ENCODE measurements at regions of chrX and their contacts with region 1.

Region 1: DNA sequence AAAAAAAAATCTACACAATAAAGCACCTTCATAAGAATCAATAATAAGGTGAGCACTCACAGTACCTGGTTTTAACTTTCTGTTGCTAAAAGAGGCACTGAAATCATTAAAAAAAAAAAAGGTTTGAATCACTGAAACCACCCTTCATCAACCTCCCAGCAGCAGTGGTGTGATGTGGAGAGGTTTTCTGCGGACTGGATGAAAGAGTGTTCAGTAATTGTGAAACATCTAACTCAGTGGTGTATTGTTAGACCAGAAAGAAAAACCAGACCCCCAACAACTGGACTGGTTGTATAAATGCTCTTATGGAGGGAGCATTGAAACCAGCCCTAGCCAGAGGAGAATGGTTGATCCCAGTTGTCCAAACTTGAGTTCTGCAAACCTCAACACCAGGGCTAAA is 63.2 kb downstream of the SPIN3 start:
- DNase-seq: no peak
- ATAC-seq: no peak
- H3K4me3 ChIP-seq: no peak overlapping the region
- H3K4me3 Mint-ChIP-seq: no peak overlapping the region
- H3K27ac ChIP-seq: no peak overlapping the region
- H3K27ac Mint-ChIP-seq: no peak overlapping the region
- H3K4me1 ChIP-seq: no peaks in the 10 kb centered on the region
- H3K4me1 Mint-ChIP-seq: no peaks in the 10 kb centered on the region
- H3K27me3 ChIP-seq: no peaks in the 10 kb centered on the region
- H3K27me3 Mint-ChIP-seq: no peaks in the 10 kb centered on the region
- CTCF ChIP-seq: no peak

Region 2: DNA sequence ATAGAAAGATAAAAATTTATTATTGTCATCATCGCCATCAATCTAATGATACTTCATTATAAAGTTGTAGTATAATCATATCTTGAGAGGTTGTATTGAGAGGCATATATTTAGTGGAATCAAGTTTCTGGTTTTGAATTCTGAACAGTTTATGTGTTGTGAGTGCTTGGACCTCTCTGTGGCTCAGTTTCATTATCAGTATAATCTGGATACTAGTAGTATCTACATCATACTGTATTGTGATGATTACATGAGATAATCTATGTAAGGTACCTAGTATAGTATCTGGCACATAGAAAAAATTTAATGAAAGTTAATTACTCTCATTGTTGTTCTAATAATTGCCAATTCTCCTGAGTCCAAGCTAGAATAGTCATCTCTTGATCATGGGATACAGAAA is 529.9 kb before region 1 on chrX:
- CTCF ChIA-PET with region 1: no interaction called
- POLR2A ChIA-PET with region 1: no interaction called
- intact Hi-C with region 1: loop called in 1 of 2 experiments (anchors 5 kb)
- DNase-seq: no peak
- ATAC-seq: no peak
- H3K4me3 ChIP-seq: no peak overlapping the region
- H3K4me3 Mint-ChIP-seq: no peak overlapping the region
- H3K27ac ChIP-seq: no peak overlapping the region
- H3K27ac Mint-ChIP-seq: no peak overlapping the region
- H3K4me1 ChIP-seq: peaks cover 8% of the 10 kb centered on the region
- H3K4me1 Mint-ChIP-seq: peaks cover 29% of the 10 kb centered on the region
- H3K27me3 ChIP-seq: no peaks in the 10 kb centered on the region
- H3K27me3 Mint-ChIP-seq: no peaks in the 10 kb centered on the region
- CTCF ChIP-seq: no peak